Activated B cell treated with CpG ODN at 0.5 μM for 24 hours (primary cell): ENCODE measurements at regions of chr6 and their contacts with region 1.

Region 1: GRCh38 chr6:13272131-13273046 is 55.9 kb downstream of the TBC1D7 start:
- DNase-seq: peak; percentile 70
- ATAC-seq: peak; percentile 74
- H3K4me3 Mint-ChIP-seq: peak overlapping the region; percentile 95
- H3K27ac Mint-ChIP-seq: peak overlapping the region; percentile 96
- H3K4me1 Mint-ChIP-seq: peaks cover 77% of the 10 kb centered on the region
- H3K27me3 Mint-ChIP-seq: no peaks in the 10 kb centered on the region
- CTCF ChIP-seq: no peak

Region 2: GRCh38 chr6:12911387-12911960 is 360.9 kb before region 1 on chr6:
- CTCF ChIA-PET with region 1: interaction called, 3 read pairs
- POLR2A ChIA-PET with region 1: interaction called, 3 read pairs
- intact Hi-C with region 1: loop called (anchors 2 kb)
- DNase-seq: no peak
- ATAC-seq: no peak
- H3K4me3 Mint-ChIP-seq: no peak overlapping the region
- H3K27ac Mint-ChIP-seq: no peak overlapping the region
- H3K4me1 Mint-ChIP-seq: peaks cover 5% of the 10 kb centered on the region
- H3K27me3 Mint-ChIP-seq: no peaks in the 10 kb centered on the region
- CTCF ChIP-seq: no peak

Region 3: GRCh38 chr6:13163161-13163944 is 109.0 kb before region 1 on chr6:
- CTCF ChIA-PET with region 1: no interaction called
- POLR2A ChIA-PET with region 1: no interaction called
- intact Hi-C with region 1: no loop called
- DNase-seq: no peak
- ATAC-seq: no peak
- H3K4me3 Mint-ChIP-seq: no peak overlapping the region
- H3K27ac Mint-ChIP-seq: no peak overlapping the region
- H3K4me1 Mint-ChIP-seq: peaks cover 2% of the 10 kb centered on the region
- H3K27me3 Mint-ChIP-seq: peaks cover 10% of the 10 kb centered on the region
- CTCF ChIP-seq: no peak

Region 4: GRCh38 chr6:13229205-13230085 is 42.9 kb before region 1 on chr6:
- CTCF ChIA-PET with region 1: no interaction called
- POLR2A ChIA-PET with region 1: interaction called, 7 read pairs
- intact Hi-C with region 1: loop called (anchors 1 kb)
- DNase-seq: peak; percentile 28
- ATAC-seq: peak; percentile 84
- H3K4me3 Mint-ChIP-seq: peak overlapping the region; percentile 7
- H3K27ac Mint-ChIP-seq: peak overlapping the region; percentile 27
- H3K4me1 Mint-ChIP-seq: peaks cover 30% of the 10 kb centered on the region
- H3K27me3 Mint-ChIP-seq: peaks cover 7% of the 10 kb centered on the region
- CTCF ChIP-seq: no peak

Region 5: GRCh38 chr6:13248053-13248452 is 24.3 kb before region 1 on chr6:
- CTCF ChIA-PET with region 1: no interaction called
- POLR2A ChIA-PET with region 1: no interaction called
- intact Hi-C with region 1: no loop called
- DNase-seq: no peak
- ATAC-seq: no peak
- H3K4me3 Mint-ChIP-seq: no peak overlapping the region
- H3K27ac Mint-ChIP-seq: no peak overlapping the region
- H3K4me1 Mint-ChIP-seq: peaks cover 16% of the 10 kb centered on the region
- H3K27me3 Mint-ChIP-seq: no peaks in the 10 kb centered on the region
- CTCF ChIP-seq: no peak

Region 6: GRCh38 chr6:13286181-13286580 is 13.8 kb after region 1 on chr6:
- CTCF ChIA-PET with region 1: interaction called, 3 read pairs
- POLR2A ChIA-PET with region 1: interaction called, 38 read pairs
- intact Hi-C with region 1: loop called (anchors 1 kb)
- DNase-seq: no peak
- ATAC-seq: peak; percentile 71
- H3K4me3 Mint-ChIP-seq: peak overlapping the region; percentile 39
- H3K27ac Mint-ChIP-seq: peak overlapping the region; percentile 59
- H3K4me1 Mint-ChIP-seq: peaks cover 67% of the 10 kb centered on the region
- H3K27me3 Mint-ChIP-seq: no peaks in the 10 kb centered on the region
- CTCF ChIP-seq: no peak

Region 7: DNA sequence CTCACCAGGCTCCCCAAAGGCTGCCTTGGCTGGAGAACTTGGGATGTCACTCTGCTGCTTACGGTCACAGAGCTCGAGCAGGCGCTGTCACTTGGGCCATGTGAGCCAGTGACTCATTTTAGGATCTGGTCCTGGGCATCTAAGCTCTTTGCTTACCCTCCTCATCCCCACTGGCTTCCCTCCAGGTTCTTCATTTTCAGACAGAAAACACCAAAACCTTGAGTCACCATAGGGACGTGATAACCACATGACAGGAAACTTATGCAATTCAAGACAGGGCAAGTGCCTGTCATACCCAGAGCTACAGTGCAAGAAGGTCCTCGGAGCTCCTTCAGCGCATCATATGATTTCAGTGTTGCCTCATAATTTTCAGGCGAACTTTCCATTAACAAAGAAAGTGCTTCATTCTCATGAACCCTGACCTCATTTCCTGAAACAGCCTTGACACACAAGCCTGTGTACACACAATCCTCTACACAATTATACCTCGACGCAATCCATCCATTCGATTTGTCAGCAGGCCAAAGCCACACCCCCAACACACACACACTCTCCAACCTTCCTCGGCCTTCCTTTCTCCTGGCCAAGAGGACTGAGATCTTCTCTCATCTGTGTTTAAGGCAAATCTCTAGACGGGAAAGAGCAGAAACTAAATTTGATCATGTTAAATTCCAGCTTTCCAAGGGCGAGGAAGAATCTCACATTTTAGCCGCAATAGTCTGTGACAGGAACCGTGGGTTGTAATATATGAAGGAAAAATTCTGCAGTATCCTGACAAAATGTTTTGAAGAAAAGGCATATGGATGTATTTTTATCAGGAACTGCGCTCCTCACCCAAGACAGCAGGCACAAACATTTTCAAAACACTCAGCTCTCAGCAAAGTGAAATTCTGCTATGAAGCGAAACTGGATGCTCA is 30.6 kb after region 1 on chr6:
- CTCF ChIA-PET with region 1: interaction called, 5 read pairs
- POLR2A ChIA-PET with region 1: interaction called, 67 read pairs
- intact Hi-C with region 1: loop called (anchors 1 kb)
- DNase-seq: no peak
- ATAC-seq: peak; percentile 55
- H3K4me3 Mint-ChIP-seq: peak overlapping the region; percentile 63
- H3K27ac Mint-ChIP-seq: peak overlapping the region; percentile 92
- H3K4me1 Mint-ChIP-seq: peaks cover 79% of the 10 kb centered on the region
- H3K27me3 Mint-ChIP-seq: no peaks in the 10 kb centered on the region
- CTCF ChIP-seq: no peak

Region 8: GRCh38 chr6:13526727-13527670 is 254.6 kb after region 1 on chr6:
- CTCF ChIA-PET with region 1: no interaction called
- POLR2A ChIA-PET with region 1: no interaction called
- intact Hi-C with region 1: loop called (anchors 2 kb)
- DNase-seq: peak; percentile 41
- ATAC-seq: peak; percentile 90
- H3K4me3 Mint-ChIP-seq: peak overlapping the region; percentile 3
- H3K27ac Mint-ChIP-seq: peak overlapping the region; percentile 78
- H3K4me1 Mint-ChIP-seq: peaks cover 47% of the 10 kb centered on the region
- H3K27me3 Mint-ChIP-seq: no peaks in the 10 kb centered on the region
- CTCF ChIP-seq: no peak